ENCODE measurements at regions of chr21 and their contacts with region 1.

Region 1: DNA sequence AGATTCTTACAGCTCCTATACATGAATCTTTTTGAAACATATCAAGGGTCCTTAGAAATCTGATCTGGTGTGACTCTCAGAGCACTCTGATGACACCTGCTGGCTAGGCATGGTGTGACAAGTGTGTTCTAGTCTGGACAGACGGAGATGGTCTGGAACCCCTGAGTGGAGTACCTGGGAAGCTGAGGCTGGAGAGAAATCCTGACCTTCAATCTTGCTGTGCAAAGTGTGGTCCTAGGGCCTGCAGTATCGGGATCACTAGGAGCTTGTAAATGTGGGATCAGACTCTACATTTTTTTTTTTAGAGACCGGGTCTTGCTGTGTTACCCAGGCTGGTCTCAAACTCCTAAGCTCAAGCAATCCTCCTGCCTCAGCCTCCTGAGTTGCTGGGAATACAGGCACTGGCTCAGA is 78.6 kb upstream of the SOD1 start:
- DNase-seq: peak; percentile 79
- H3K4me3 ChIP-seq: no peak overlapping the region
- H3K27ac ChIP-seq: no peak overlapping the region
- H3K4me1 ChIP-seq: no peaks in the 10 kb centered on the region
- H3K27me3 ChIP-seq: no peaks in the 10 kb centered on the region
- CTCF ChIP-seq: peak; percentile 73

Region 2: GRCh38 chr21:31198575-31198974 is 382.3 kb before region 1 on chr21:
- intact Hi-C with region 1: loop called (anchors 2 kb)
- DNase-seq: no peak
- H3K4me3 ChIP-seq: no peak overlapping the region
- H3K27ac ChIP-seq: no peak overlapping the region
- H3K4me1 ChIP-seq: no peaks in the 10 kb centered on the region
- H3K27me3 ChIP-seq: no peaks in the 10 kb centered on the region
- CTCF ChIP-seq: peak; percentile 40

Region 3: GRCh38 chr21:31347435-31348032 is 233.3 kb before region 1 on chr21:
- intact Hi-C with region 1: loop called (anchors 5 kb)
- DNase-seq: no peak
- H3K4me3 ChIP-seq: no peak overlapping the region
- H3K27ac ChIP-seq: no peak overlapping the region
- H3K4me1 ChIP-seq: no peaks in the 10 kb centered on the region
- H3K27me3 ChIP-seq: no peaks in the 10 kb centered on the region
- CTCF ChIP-seq: peak; percentile 30

Region 4: DNA sequence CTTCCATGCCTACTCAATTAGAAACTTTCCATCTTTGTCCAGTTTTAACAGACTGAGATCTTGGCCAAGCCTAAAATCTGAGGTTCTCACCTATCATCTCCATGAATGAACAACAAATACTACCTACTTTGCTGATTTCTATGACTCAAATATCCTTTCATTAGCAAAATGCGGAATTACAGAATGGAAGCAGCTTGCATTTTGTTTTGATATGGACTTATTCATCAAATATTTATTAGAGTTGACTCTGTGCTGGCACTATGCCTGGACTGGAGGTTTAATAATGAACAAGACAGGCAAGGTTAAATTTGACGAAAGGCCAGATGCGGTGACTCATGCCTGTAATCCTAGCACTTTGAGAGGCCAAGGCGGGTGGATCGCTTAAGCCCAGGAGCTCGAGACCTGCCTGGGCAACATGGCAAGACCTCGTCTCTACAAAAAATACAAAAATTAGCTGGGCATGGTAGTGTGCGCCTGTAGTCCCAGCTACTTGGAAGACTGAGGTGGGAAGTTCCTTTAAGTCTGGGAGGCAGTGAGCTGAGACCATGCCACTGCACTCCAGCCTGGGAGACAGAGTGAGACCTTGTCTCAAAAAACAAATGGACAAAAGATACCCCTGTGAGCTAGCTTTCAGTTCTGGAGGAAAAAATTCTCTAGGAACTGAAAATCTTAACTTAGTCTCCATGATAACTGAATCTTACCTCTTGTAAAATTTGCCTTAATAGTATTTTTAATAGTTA is 49.3 kb after region 1 on chr21:
- intact Hi-C with region 1: no loop called
- DNase-seq: no peak
- H3K4me3 ChIP-seq: no peak overlapping the region
- H3K27ac ChIP-seq: no peak overlapping the region
- H3K4me1 ChIP-seq: no peaks in the 10 kb centered on the region
- H3K27me3 ChIP-seq: no peaks in the 10 kb centered on the region
- CTCF ChIP-seq: no peak

Measured in colonic mucosa (tissue), 4 donors.